Naive thymus-derived CD4-positive, alpha-beta T cell (primary cell): ENCODE measurements at regions of chr16 and their contacts with region 1.

Region 1: DNA sequence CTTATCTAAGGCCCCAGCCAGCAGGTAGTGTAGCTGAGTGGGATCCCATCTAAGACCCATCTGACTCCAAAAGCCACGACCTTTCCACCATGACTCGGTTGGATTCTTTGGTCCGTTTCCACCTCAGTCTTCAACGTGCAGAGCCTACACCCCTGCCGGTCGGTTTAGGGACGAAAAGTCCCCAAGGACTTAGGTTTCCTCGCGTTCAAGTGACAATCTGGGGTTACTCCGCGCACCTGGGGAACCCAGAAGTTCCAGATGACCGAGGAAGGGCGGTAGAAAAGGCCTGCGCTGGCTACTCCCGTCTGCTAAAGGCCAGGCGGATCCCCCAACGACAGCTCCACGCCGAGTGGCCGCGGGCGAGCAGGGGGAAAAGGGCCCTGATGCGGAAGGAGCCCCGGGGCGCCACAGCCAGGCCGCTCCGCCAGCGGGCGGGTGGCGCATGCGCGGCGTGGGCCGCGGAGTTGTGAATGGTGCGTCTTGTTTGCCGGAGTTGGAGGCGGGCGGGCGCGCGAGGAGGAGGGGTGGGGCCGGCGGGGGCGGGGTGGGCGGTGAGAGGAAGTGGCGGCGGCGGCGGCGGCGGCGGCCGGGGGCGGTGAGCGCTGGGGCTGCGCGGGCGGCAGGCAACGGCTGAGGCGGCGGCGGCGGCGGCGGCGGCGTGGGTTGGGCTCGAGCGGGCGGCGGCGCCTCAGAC is at the start of gene CBFB:
- DNase-seq: peak; percentile 92 to 97 (median 96)
- ATAC-seq: peak; percentile 92
- H3K4me3 ChIP-seq: peak within 1 kb of the TSS; percentile 78
- H3K4me3 Mint-ChIP-seq: peak within 1 kb of the TSS; percentile 86 to 93 (median 90)
- H3K27ac ChIP-seq: peak within 1 kb of the TSS; percentile 99
- H3K27ac Mint-ChIP-seq: peak within 1 kb of the TSS; percentile 90 to 97 (median 95)
- H3K4me1 ChIP-seq: peaks cover 16 to 23% of the 10 kb centered on the region in 2 donors
- H3K4me1 Mint-ChIP-seq: peaks cover 17 to 53% (median 46%) of the 10 kb centered on the region in 7 donors
- H3K27me3 ChIP-seq: no peaks in the 10 kb centered on the region
- H3K27me3 Mint-ChIP-seq: no peaks in the 10 kb centered on the region
- total RNA-seq, gene CBFB: 75.4 to 223 (median 94.4) TPM

Region 2: GRCh38 chr16:66696669-66697630 is 331.8 kb before region 1 on chr16 and contains the start of gene CMTM4:
- CTCF ChIA-PET with region 1: no interaction called
- POLR2A ChIA-PET with region 1: no interaction called
- intact Hi-C with region 1: loop called in 1 of 2 experiments (anchors 5 kb)
- DNase-seq: peak; percentile 56 to 85 (median 72)
- ATAC-seq: peak; percentile 98
- H3K4me3 ChIP-seq: peak within 1 kb of the TSS; percentile 69
- H3K4me3 Mint-ChIP-seq: peak within 1 kb of the TSS; percentile 77 to 91 (median 83)
- H3K27ac ChIP-seq: peak within 1 kb of the TSS; percentile 45
- H3K27ac Mint-ChIP-seq: peak within 1 kb of the TSS in 5 of 9 donors; percentile 36 to 81 (median 47)
- H3K4me1 ChIP-seq: peaks cover 5 to 10% of the 10 kb centered on the region in 2 donors
- H3K4me1 Mint-ChIP-seq: peaks cover 6 to 16% (median 12%) of the 10 kb centered on the region in 7 donors
- H3K27me3 ChIP-seq: no peaks in the 10 kb centered on the region
- H3K27me3 Mint-ChIP-seq: peaks cover 0 to 57% (median 7%) of the 10 kb centered on the region in 5 donors
- total RNA-seq, gene CMTM4: 1.5 to 2.5 (median 1.8) TPM

Region 3: DNA sequence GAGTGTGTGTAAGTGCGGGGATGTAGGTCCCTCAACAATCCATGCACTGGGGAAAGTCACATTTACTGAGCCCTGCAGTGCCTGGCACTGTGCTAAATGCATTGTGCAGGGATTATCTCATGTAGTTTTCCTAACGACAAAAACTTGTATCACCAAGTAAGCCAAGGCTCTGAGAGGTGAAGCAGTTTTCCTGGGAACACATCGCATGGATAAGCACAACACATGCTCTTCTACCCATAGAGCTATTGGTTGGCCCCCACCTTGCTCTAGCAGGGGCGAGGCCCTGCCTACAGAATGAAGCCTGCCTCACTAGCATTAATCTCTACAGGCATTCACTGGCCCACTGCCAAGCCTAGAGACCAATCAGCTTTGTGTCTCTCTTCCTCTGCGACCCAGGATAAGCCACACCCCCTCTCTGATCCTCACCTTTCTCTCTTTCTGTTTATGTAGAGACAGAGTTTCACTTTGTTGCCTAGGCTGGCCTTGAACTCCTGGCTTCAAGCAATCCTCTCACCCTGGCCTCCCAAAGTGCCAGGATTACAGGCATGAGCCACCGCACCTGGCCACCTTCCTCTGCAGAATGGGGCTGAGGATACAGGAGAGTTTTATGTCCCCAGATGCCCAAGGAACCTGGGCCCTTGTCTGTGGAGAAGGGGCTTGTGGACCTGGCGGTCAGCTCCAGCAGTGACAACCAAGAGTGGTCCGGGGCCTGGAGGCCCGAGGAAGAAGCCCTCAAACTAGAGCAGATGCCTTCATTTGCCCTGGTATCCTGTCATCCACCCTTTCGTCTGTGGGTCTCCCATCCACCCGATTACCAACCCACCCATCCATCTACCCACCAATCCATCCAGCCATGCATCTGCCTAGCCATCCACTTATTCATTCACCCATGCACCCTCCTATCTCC is 122.8 kb before region 1 on chr16:
- CTCF ChIA-PET with region 1: no interaction called
- POLR2A ChIA-PET with region 1: no interaction called
- intact Hi-C with region 1: no loop called
- DNase-seq: peak in 7 of 9 donors; percentile 37 to 74 (median 63)
- ATAC-seq: peak; percentile 50
- H3K4me3 ChIP-seq: no peak overlapping the region
- H3K4me3 Mint-ChIP-seq: peak overlapping the region in 2 of 10 donors; percentile 25 to 40
- H3K27ac ChIP-seq: no peak overlapping the region
- H3K27ac Mint-ChIP-seq: peak overlapping the region in 7 of 9 donors; percentile 1 to 76 (median 62)
- H3K4me1 ChIP-seq: peaks cover 0 to 12% of the 10 kb centered on the region in 2 donors
- H3K4me1 Mint-ChIP-seq: peaks cover 8 to 15% (median 11%) of the 10 kb centered on the region in 7 donors
- H3K27me3 ChIP-seq: no peaks in the 10 kb centered on the region
- H3K27me3 Mint-ChIP-seq: no peaks in the 10 kb centered on the region

Region 4: GRCh38 chr16:67000384-67001351 is 28.0 kb before region 1 on chr16:
- CTCF ChIA-PET with region 1: no interaction called
- POLR2A ChIA-PET with region 1: interaction called, 5 read pairs
- intact Hi-C with region 1: loop called in 1 of 2 experiments (anchors 1 kb)
- DNase-seq: peak; percentile 39 to 73 (median 61)
- ATAC-seq: peak; percentile 81
- H3K4me3 ChIP-seq: peak overlapping the region; percentile 75
- H3K4me3 Mint-ChIP-seq: peak overlapping the region; percentile 65 to 88 (median 84)
- H3K27ac ChIP-seq: peak overlapping the region; percentile 72
- H3K27ac Mint-ChIP-seq: peak overlapping the region; percentile 68 to 89 (median 80)
- H3K4me1 ChIP-seq: peaks cover 4 to 9% of the 10 kb centered on the region in 2 donors
- H3K4me1 Mint-ChIP-seq: peaks cover 6 to 42% (median 14%) of the 10 kb centered on the region in 7 donors
- H3K27me3 ChIP-seq: no peaks in the 10 kb centered on the region
- H3K27me3 Mint-ChIP-seq: no peaks in the 10 kb centered on the region

Region 5: GRCh38 chr16:67040906-67041305 is 12.2 kb after region 1 on chr16:
- CTCF ChIA-PET with region 1: no interaction called
- POLR2A ChIA-PET with region 1: interaction called, 33 read pairs
- intact Hi-C with region 1: no loop called
- DNase-seq: no peak
- ATAC-seq: no peak
- H3K4me3 ChIP-seq: no peak overlapping the region
- H3K4me3 Mint-ChIP-seq: no peak overlapping the region
- H3K27ac ChIP-seq: no peak overlapping the region
- H3K27ac Mint-ChIP-seq: peak overlapping the region in 4 of 9 donors; percentile 8 to 36 (median 16)
- H3K4me1 ChIP-seq: no peaks in the 10 kb centered on the region
- H3K4me1 Mint-ChIP-seq: peaks cover 14 to 46% (median 21%) of the 10 kb centered on the region in 7 donors
- H3K27me3 ChIP-seq: no peaks in the 10 kb centered on the region
- H3K27me3 Mint-ChIP-seq: no peaks in the 10 kb centered on the region

Region 6: GRCh38 chr16:67068212-67068753 is 39.6 kb after region 1 on chr16:
- CTCF ChIA-PET with region 1: no interaction called
- POLR2A ChIA-PET with region 1: interaction called, 4 read pairs
- intact Hi-C with region 1: loop called in 1 of 2 experiments (anchors 5 kb)
- DNase-seq: no peak
- ATAC-seq: no peak
- H3K4me3 ChIP-seq: no peak overlapping the region
- H3K4me3 Mint-ChIP-seq: no peak overlapping the region
- H3K27ac ChIP-seq: no peak overlapping the region
- H3K27ac Mint-ChIP-seq: peak overlapping the region in 2 of 9 donors; percentile 11 to 17
- H3K4me1 ChIP-seq: peaks cover 0 to under 1% of the 10 kb centered on the region in 2 donors
- H3K4me1 Mint-ChIP-seq: peaks cover 0 to 11% (median 5%) of the 10 kb centered on the region in 7 donors
- H3K27me3 ChIP-seq: no peaks in the 10 kb centered on the region
- H3K27me3 Mint-ChIP-seq: no peaks in the 10 kb centered on the region

Region 7: GRCh38 chr16:67159593-67160406 is 131.1 kb after region 1 on chr16 and contains the starts of genes FBXL8 and TRADD:
- CTCF ChIA-PET with region 1: interaction called, 5 read pairs
- POLR2A ChIA-PET with region 1: interaction called, 7 read pairs
- intact Hi-C with region 1: loop called (anchors 1 kb)
- DNase-seq: peak; percentile 73 to 91 (median 82)
- ATAC-seq: peak; percentile 78
- H3K4me3 ChIP-seq: peak within 1 kb of the TSS; percentile 78
- H3K4me3 Mint-ChIP-seq: peak within 1 kb of the TSS; percentile 76 to 93 (median 87)
- H3K27ac ChIP-seq: peak within 1 kb of the TSS; percentile 94
- H3K27ac Mint-ChIP-seq: peak within 1 kb of the TSS; percentile 94 to 99 (median 95)
- H3K4me1 ChIP-seq: peaks cover 49 to 59% of the 10 kb centered on the region in 2 donors
- H3K4me1 Mint-ChIP-seq: peaks cover 25 to 66% (median 51%) of the 10 kb centered on the region in 7 donors
- H3K27me3 ChIP-seq: peaks cover 1 to 19% of the 10 kb centered on the region in 2 donors
- H3K27me3 Mint-ChIP-seq: peaks cover 5 to 12% (median 10%) of the 10 kb centered on the region in 5 donors
- total RNA-seq, gene FBXL8: 8.7 to 84.7 (median 9.7) TPM
- total RNA-seq, gene TRADD: 47.0 to 92.8 (median 52.8) TPM

Region 8: GRCh38 chr16:67191995-67192681 is 163.4 kb after region 1 on chr16 and contains the start of gene E2F4:
- CTCF ChIA-PET with region 1: no interaction called
- POLR2A ChIA-PET with region 1: interaction called, 3 read pairs
- intact Hi-C with region 1: loop called in 1 of 2 experiments (anchors 1 kb)
- DNase-seq: peak; percentile 72 to 88 (median 80)
- ATAC-seq: peak; percentile 97
- H3K4me3 ChIP-seq: peak within 1 kb of the TSS; percentile 72
- H3K4me3 Mint-ChIP-seq: peak within 1 kb of the TSS; percentile 83 to 93 (median 92)
- H3K27ac ChIP-seq: peak within 1 kb of the TSS; percentile 94
- H3K27ac Mint-ChIP-seq: peak within 1 kb of the TSS; percentile 53 to 95 (median 91)
- H3K4me1 ChIP-seq: peaks cover 22 to 26% of the 10 kb centered on the region in 2 donors
- H3K4me1 Mint-ChIP-seq: peaks cover 22 to 50% (median 46%) of the 10 kb centered on the region in 7 donors
- H3K27me3 ChIP-seq: no peaks in the 10 kb centered on the region
- H3K27me3 Mint-ChIP-seq: peaks cover 0 to 3% (median 0%) of the 10 kb centered on the region in 5 donors
- total RNA-seq, gene E2F4: 67.1 to 133 (median 73.0) TPM